Activated CD4-positive, alpha-beta memory T cell treated with anti-CD3 and anti-CD28 coated beads, Interleukin-2, amount 10 ng/mL, durations not matched to agents 7 days and 5 days (primary cell): ENCODE measurements at regions of chr14 and their contacts with region 1.

Region 1: GRCh38 chr14:93939304-93940229 is 12.4 kb downstream of the FAM181A start:
- DNase-seq: peak; percentile 92
- H3K4me3 Mint-ChIP-seq: peak overlapping the region; percentile 52
- H3K27ac Mint-ChIP-seq: peak overlapping the region; percentile 68
- H3K4me1 Mint-ChIP-seq: peaks cover 36% of the 10 kb centered on the region
- H3K27me3 Mint-ChIP-seq: no peaks in the 10 kb centered on the region

Region 2: GRCh38 chr14:93789228-93790130 is 150.1 kb before region 1 on chr14:
- CTCF ChIA-PET with region 1: no interaction called
- POLR2A ChIA-PET with region 1: no interaction called
- DNase-seq: no peak
- H3K4me3 Mint-ChIP-seq: no peak overlapping the region
- H3K27ac Mint-ChIP-seq: no peak overlapping the region
- H3K4me1 Mint-ChIP-seq: peaks cover 7% of the 10 kb centered on the region
- H3K27me3 Mint-ChIP-seq: peaks cover 70% of the 10 kb centered on the region

Region 3: GRCh38 chr14:93799617-93799988 is 140.0 kb before region 1 on chr14:
- CTCF ChIA-PET with region 1: no interaction called
- POLR2A ChIA-PET with region 1: no interaction called
- DNase-seq: no peak
- H3K4me3 Mint-ChIP-seq: no peak overlapping the region
- H3K27ac Mint-ChIP-seq: no peak overlapping the region
- H3K4me1 Mint-ChIP-seq: no peaks in the 10 kb centered on the region
- H3K27me3 Mint-ChIP-seq: peaks cover 12% of the 10 kb centered on the region

Region 4: DNA sequence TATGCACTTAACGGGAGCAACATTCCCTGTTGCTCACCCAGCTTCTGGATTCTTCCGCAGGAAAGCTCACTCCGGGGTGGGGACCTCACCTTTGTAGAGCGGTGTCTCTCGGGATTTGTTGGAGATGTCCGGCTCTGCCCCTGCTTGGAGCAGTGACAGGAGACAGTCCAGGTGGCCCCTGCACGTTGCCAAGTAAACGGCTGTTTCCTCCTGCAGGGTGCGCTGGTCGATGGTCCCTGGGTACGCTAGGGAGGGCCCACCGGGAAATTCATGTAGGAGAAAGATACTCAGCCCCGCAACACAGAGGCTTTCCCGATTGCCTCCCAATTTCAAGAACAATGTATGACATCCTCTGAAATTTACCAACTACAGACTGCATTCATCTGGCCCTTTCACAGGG is 13.7 kb after region 1 on chr14:
- CTCF ChIA-PET with region 1: interaction called, 88 read pairs
- POLR2A ChIA-PET with region 1: interaction called, 23 read pairs
- DNase-seq: no peak
- H3K4me3 Mint-ChIP-seq: peak overlapping the region; percentile 91
- H3K27ac Mint-ChIP-seq: peak overlapping the region; percentile 99
- H3K4me1 Mint-ChIP-seq: peaks cover 83% of the 10 kb centered on the region
- H3K27me3 Mint-ChIP-seq: no peaks in the 10 kb centered on the region

Region 5: GRCh38 chr14:93975791-93976476 is 36.4 kb after region 1 on chr14:
- CTCF ChIA-PET with region 1: interaction called, 354 read pairs
- POLR2A ChIA-PET with region 1: interaction called, 79 read pairs
- DNase-seq: peak; percentile 52
- H3K4me3 Mint-ChIP-seq: peak overlapping the region; percentile 78
- H3K27ac Mint-ChIP-seq: peak overlapping the region; percentile 97
- H3K4me1 Mint-ChIP-seq: peaks cover 89% of the 10 kb centered on the region
- H3K27me3 Mint-ChIP-seq: no peaks in the 10 kb centered on the region

Region 6: GRCh38 chr14:94001501-94002396 is 62.2 kb after region 1 on chr14:
- CTCF ChIA-PET with region 1: interaction called, 300 read pairs
- POLR2A ChIA-PET with region 1: interaction called, 63 read pairs
- DNase-seq: peak; percentile 65
- H3K4me3 Mint-ChIP-seq: no peak overlapping the region
- H3K27ac Mint-ChIP-seq: peak overlapping the region; percentile 21
- H3K4me1 Mint-ChIP-seq: peaks cover 45% of the 10 kb centered on the region
- H3K27me3 Mint-ChIP-seq: peaks cover 6% of the 10 kb centered on the region

Region 7: DNA sequence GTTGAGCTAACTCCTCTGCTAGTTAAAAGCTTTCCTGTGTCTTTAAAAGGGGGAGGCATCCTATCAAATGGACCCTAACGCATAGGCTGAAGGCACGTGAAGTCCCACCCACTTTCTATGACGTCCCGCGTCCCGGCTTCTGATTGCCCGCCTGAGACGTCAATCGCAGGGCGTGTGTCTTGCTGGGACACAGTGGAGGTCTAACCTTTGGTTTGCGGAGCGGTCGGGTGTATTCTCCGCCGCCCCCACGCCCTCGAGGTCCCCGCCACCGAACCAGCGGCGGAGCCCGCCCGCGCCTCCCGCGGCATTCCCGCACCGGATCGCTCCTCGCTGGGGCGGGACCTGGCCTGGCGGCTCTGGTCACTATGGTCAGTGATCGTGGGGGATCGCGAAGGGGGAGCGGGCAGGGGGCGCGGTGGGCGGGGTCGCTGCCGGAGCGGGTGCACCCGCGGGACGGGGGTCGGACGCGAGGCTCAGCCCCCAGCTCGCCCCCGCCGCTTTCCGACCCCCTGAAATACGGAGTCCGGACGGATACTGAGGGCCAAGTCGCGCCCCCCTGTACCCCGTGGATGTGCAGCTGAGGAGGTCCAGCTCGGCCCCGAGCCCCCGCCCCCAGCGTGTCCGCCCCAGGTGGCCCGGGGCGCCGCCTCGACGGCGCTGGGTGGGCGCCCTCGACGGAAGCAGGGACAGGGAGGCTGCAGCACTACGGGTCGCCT is 86.8 kb after region 1 on chr14 and contains the start of gene OTUB2:
- CTCF ChIA-PET with region 1: interaction called, 41 read pairs
- POLR2A ChIA-PET with region 1: interaction called, 4 read pairs
- DNase-seq: peak; percentile 99
- H3K4me3 Mint-ChIP-seq: peak within 1 kb of the TSS; percentile 78
- H3K27ac Mint-ChIP-seq: peak within 1 kb of the TSS; percentile 71
- H3K4me1 Mint-ChIP-seq: peaks cover 68% of the 10 kb centered on the region
- H3K27me3 Mint-ChIP-seq: no peaks in the 10 kb centered on the region
- total RNA-seq, gene OTUB2: 7.3 to 7.9 TPM

Region 8: GRCh38 chr14:94080471-94081289 is 141.1 kb after region 1 on chr14 and contains the start of gene DDX24:
- CTCF ChIA-PET with region 1: interaction called, 18 read pairs
- POLR2A ChIA-PET with region 1: interaction called, 6 read pairs
- DNase-seq: peak; percentile 98
- H3K4me3 Mint-ChIP-seq: peak within 1 kb of the TSS; percentile 98
- H3K27ac Mint-ChIP-seq: peak within 1 kb of the TSS; percentile 98
- H3K4me1 Mint-ChIP-seq: peaks cover 61% of the 10 kb centered on the region
- H3K27me3 Mint-ChIP-seq: no peaks in the 10 kb centered on the region
- total RNA-seq, gene DDX24: 210 to 216 TPM

Region 9: GRCh38 chr14:94180655-94181271 is 241.2 kb after region 1 on chr14:
- CTCF ChIA-PET with region 1: interaction called, 22 read pairs
- POLR2A ChIA-PET with region 1: no interaction called
- DNase-seq: no peak
- H3K4me3 Mint-ChIP-seq: peak overlapping the region; percentile 59
- H3K27ac Mint-ChIP-seq: peak overlapping the region; percentile 47
- H3K4me1 Mint-ChIP-seq: peaks cover 24% of the 10 kb centered on the region
- H3K27me3 Mint-ChIP-seq: peaks cover 10% of the 10 kb centered on the region